Ascending aorta (tissue), 2 donors: ENCODE measurements at regions of chr12 and their contacts with region 1.

Region 1: DNA sequence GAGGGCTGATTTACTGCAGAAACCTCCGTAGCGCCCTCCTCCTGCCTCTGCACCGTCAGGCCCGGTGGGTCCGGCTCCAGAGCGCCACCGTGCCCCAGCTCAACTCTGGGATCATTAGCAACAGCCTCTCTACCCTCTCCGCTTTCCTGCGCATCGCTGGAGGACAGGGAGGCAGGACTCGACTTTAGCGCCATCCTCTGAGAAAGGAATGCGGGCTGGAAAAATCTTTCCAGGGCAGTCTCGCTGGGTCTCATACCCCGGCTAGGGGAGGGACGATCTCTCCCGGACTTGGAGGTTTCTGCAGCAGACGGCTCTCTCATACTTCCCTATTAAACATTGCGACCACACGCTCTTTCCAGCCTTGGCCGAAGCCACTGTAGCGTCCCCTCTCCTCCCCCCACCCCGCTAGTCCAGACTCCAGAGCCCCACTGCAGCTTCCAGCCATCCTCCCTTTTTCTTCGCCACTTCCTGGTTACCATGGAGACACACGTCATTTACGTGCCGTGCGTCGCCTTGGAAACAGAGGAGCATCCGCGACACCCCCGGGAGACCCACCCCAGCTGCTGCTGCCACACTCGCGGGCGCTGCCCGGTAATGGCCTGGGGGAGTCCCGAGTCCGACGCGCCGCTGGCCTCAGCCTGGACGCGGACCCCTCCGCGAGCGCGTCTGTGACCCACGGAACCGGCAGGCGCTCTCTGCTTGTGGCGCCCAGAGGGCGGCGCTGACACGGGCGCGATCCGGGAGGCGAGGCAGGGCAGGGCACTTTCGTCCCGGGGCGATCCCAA is at the start of gene CCDC184:
- DNase-seq: peak in 1 of 2 donors; percentile 87
- H3K4me3 ChIP-seq: peak within 1 kb of the TSS; percentile 74 to 89
- H3K27ac ChIP-seq: peak within 1 kb of the TSS; percentile 55 to 70
- H3K4me1 ChIP-seq: peaks cover 4 to 8% of the 10 kb centered on the region in 2 donors
- H3K27me3 ChIP-seq: no peaks in the 10 kb centered on the region
- CTCF ChIP-seq: peak; percentile 41 to 58 (median 47)
- total RNA-seq, gene CCDC184: 1.6 TPM

Region 2: DNA sequence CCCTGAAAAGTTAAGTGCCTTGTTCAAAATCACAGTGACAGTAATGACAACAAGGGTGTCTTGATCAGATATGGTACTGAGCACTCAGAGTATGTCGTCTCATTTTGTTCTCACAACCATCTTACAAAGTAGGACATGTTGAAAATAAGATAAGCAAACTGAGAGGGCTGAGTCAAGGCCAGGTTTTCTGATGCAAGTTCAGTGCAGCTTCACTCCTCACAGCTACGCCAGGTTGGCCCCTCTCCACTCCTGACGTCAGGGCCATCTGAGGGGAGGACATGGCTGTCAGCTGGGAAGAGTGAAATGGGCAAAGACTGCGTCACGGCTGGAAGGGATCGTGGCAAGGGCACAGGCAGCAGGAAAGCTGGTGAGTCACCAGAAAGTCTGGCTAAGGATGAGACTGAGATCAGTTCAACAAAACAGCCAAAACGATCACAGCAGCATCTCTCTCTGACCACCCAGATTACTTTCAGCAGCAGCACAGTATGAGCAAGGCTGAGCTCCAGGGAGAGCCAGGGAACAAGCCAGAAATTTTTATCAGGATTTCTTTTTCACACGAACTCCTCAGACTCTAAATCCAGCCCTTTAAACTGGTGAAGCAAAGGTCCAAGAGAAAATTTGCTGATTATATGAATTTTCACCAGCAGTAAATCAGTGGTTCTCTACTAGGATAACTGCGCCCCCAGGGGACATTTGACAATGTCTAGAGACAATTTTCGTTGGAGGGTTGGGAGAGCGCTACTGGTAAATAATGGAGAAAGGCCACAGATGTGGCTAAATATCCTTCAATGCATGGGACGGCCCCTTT is 805.7 kb before region 1 on chr12:
- intact Hi-C with region 1: loop called (anchors 10 kb)
- DNase-seq: peak; percentile 95 to 99
- H3K4me3 ChIP-seq: peak overlapping the region in 1 of 2 donors; percentile 23
- H3K27ac ChIP-seq: peak overlapping the region; percentile 85 to 91
- H3K4me1 ChIP-seq: peaks cover 0 to 13% of the 10 kb centered on the region in 2 donors
- H3K27me3 ChIP-seq: no peaks in the 10 kb centered on the region
- CTCF ChIP-seq: no peak

Region 3: DNA sequence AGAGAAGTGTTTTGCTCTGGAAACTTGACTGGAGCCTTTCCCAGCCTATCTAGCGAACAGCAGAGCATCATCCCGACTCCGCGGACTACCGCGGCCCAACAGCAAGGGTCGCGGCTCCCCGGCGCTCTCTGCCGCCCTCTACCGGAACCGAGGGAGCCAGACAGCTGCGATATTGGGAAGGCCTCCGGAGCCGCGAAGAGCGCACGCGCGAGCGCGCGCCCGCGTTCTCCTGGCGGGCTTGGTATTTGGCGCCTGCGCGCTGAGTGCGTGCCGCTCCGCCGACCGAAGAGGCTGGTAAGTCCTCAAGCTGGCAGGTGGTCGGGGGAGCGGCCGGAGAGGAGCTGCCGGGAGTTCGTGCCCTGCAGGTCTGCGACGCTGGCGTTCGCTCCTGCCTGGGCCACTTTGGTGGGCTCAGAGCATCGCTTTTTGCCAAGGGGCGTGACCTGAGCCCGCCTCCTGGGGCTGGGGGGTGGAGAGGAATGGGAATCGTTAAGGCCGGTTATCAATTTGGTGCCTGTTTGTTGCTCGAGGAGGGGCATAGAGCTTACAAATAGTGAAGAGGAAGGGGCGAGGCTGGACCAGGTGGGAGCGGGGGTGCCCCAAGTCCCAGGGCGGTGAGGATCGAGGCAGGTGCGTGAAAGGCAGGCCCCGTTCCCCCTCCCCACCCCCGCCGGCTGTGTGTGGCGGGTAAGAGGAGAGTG is 219.8 kb before region 1 on chr12 and contains the start of gene TMEM106C:
- intact Hi-C with region 1: loop called (anchors 10 kb)
- DNase-seq: peak; percentile 48 to 95
- H3K4me3 ChIP-seq: peak within 1 kb of the TSS; percentile 81 to 96
- H3K27ac ChIP-seq: peak within 1 kb of the TSS; percentile 53 to 60
- H3K4me1 ChIP-seq: peaks cover 3 to 16% of the 10 kb centered on the region in 2 donors
- H3K27me3 ChIP-seq: no peaks in the 10 kb centered on the region
- CTCF ChIP-seq: peak; percentile 91 to 99 (median 98)
- total RNA-seq, gene TMEM106C: 120 TPM

Region 4: GRCh38 chr12:48157018-48157888 is 26.0 kb before region 1 on chr12 and contains the start of gene ASB8:
- intact Hi-C with region 1: loop called (anchors 1 kb)
- DNase-seq: peak; percentile 94 to 100
- H3K4me3 ChIP-seq: peak within 1 kb of the TSS; percentile 75 to 88
- H3K27ac ChIP-seq: peak within 1 kb of the TSS; percentile 76 to 78
- H3K4me1 ChIP-seq: peaks cover 0 to 8% of the 10 kb centered on the region in 2 donors
- H3K27me3 ChIP-seq: no peaks in the 10 kb centered on the region
- CTCF ChIP-seq: peak; percentile 57 to 63 (median 60)
- total RNA-seq, gene ASB8: 23.7 TPM

Region 5: GRCh38 chr12:48592591-48593088 is 409.4 kb after region 1 on chr12:
- intact Hi-C with region 1: no loop called
- DNase-seq: no peak
- H3K4me3 ChIP-seq: no peak overlapping the region
- H3K27ac ChIP-seq: no peak overlapping the region
- H3K4me1 ChIP-seq: no peaks in the 10 kb centered on the region
- H3K27me3 ChIP-seq: no peaks in the 10 kb centered on the region
- CTCF ChIP-seq: no peak

Region 6: GRCh38 chr12:48640854-48641253 is 457.6 kb after region 1 on chr12:
- intact Hi-C with region 1: no loop called
- DNase-seq: no peak
- H3K4me3 ChIP-seq: no peak overlapping the region
- H3K27ac ChIP-seq: no peak overlapping the region
- H3K4me1 ChIP-seq: no peaks in the 10 kb centered on the region
- H3K27me3 ChIP-seq: no peaks in the 10 kb centered on the region
- CTCF ChIP-seq: no peak